PC-3 (cell line): ENCODE measurements at regions of chr4 and their contacts with region 1.

Region 1: DNA sequence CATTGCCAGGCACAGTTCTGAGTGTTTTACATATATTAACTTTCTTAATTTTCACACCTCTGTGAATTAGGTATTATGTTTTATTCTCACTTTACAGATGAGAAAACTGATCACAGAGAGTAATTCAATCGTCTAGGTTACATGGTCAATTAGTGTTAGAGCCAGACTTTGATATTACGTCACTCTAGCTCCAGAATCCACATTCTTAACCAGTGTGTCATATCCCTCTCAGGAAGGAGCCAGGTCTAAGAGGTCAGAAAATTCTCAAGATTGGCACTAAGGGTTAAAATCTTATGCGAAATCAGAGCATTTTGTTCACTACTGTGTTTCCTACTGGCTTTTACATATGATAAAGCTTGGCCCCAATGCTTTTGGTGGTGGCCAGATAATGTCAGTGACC is 7.4 kb downstream of the DMP1 start:
- DNase-seq: peak; percentile 71
- ATAC-seq: 0 out of 2 replicates have a peak, but pooled peaks have one; percentile 6
- H3K4me3 ChIP-seq: no peak overlapping the region
- H3K27ac ChIP-seq: peak overlapping the region; percentile 85
- H3K4me1 ChIP-seq: peaks cover 33% of the 10 kb centered on the region
- H3K27me3 ChIP-seq: no peaks in the 10 kb centered on the region
- CTCF ChIP-seq: no peak

Region 2: GRCh38 chr4:87543835-87544461 is 113.6 kb before region 1 on chr4:
- CTCF ChIA-PET with region 1: no interaction called
- POLR2A ChIA-PET with region 1: no interaction called
- intact Hi-C with region 1: loop called (anchors 1 kb)
- DNase-seq: peak; percentile 69
- ATAC-seq: peak; percentile 80
- H3K4me3 ChIP-seq: no peak overlapping the region
- H3K27ac ChIP-seq: no peak overlapping the region
- H3K4me1 ChIP-seq: no peaks in the 10 kb centered on the region
- H3K27me3 ChIP-seq: no peaks in the 10 kb centered on the region
- CTCF ChIP-seq: peak; percentile 73